ENCODE measurements at regions of chr17 and their contacts with region 1.

Region 1: DNA sequence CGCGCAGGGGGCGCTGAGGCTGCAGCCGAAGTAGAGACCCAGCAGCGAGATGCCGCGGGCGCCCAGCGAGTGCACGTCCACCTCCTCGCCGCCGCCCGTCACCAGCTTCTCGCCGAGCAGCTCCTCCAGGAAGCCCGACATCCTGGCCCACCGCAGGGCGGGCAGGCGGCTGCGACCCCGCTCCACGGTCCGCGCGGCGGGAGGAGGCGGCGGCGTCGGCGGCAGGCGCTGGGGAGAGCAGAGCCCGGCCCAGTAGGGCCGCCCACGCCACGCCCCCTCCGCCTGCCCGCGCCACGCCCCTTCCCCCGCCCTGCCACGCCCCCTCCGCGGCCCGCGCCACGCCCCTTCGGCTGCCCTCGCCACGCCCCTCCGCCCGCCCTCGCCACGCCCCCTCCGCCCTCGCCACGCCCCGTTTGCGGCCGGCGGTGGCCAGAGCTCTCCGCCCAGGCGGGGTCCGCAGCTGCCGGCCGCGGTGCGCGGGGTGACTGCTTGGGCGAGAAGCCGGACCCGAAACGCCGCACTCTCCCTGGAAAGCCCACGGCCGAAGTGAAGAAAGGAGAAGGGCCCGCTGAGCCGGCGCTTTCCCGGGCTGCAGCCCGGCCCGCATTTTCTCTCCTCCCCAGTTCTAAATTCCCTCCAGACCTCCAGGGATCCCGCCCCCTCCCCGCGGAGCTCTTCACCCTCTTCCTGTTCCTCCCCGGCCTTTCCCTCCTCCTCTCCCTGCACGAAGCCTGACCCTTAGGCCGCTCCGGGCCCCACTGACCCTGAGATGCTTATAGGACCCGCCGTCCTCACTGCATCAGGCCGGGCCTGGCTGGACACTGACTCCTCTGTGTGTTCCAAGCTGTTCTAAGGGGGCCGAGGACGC is at the start of gene NXN:
- DNase-seq: peak; percentile 80 to 92 (median 84)
- H3K4me3 ChIP-seq: peak within 1 kb of the TSS; percentile 40
- H3K4me3 Mint-ChIP-seq: peak within 1 kb of the TSS; percentile 74 to 86 (median 80)
- H3K27ac ChIP-seq: no peak within 1 kb of the TSS
- H3K27ac Mint-ChIP-seq: peak within 1 kb of the TSS in 4 of 8 donors; percentile 23 to 82 (median 42)
- H3K4me1 ChIP-seq: peaks cover 19% of the 10 kb centered on the region
- H3K4me1 Mint-ChIP-seq: peaks cover 12 to 23% (median 14%) of the 10 kb centered on the region in 3 donors
- H3K27me3 ChIP-seq: peaks cover 24% of the 10 kb centered on the region
- H3K27me3 Mint-ChIP-seq: peaks cover 27 to 35% of the 10 kb centered on the region in 2 donors
- total RNA-seq, gene NXN: 0.31 to 0.42 TPM

Region 2: DNA sequence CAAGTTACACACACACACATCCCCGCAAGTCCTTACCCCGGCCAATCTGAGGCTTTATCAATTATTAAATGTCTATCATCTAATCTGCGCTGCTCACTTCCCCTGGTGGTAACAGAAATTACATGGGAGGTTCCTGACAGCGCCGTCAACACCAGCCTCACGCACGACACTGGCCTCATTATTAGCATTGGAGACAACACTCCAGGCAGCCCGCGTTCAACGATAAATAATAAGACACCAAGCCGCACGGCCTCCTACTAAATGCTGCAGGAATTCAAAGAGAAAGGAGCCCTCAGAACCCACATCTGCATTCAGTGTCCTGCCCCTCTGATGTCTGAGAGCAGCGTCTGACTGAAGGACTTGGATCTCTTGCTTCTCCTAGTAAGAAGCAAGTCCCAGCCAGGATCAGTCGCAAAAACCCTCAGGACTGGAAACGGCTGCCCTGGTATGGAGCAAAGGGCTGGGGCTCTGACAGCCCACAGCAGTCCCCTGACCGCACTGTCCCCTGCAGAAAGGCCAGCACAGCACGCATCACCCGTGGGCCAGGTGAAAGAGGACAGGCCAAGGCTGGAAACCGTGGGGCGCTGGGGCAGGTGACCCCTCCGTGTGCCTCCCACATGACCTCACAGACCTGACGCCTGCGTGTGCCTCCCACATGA is 619.6 kb before region 1 on chr17:
- CTCF ChIA-PET with region 1: no interaction called
- POLR2A ChIA-PET with region 1: no interaction called
- DNase-seq: no peak
- H3K4me3 ChIP-seq: no peak overlapping the region
- H3K4me3 Mint-ChIP-seq: no peak overlapping the region
- H3K27ac ChIP-seq: no peak overlapping the region
- H3K27ac Mint-ChIP-seq: no peak overlapping the region
- H3K4me1 ChIP-seq: no peaks in the 10 kb centered on the region
- H3K4me1 Mint-ChIP-seq: peaks cover 0 to 12% (median 4%) of the 10 kb centered on the region in 3 donors
- H3K27me3 ChIP-seq: no peaks in the 10 kb centered on the region
- H3K27me3 Mint-ChIP-seq: peaks cover 0 to 2% of the 10 kb centered on the region in 2 donors

Region 3: GRCh38 chr17:794876-795275 is 184.9 kb before region 1 on chr17:
- CTCF ChIA-PET with region 1: interaction called, 12 read pairs
- POLR2A ChIA-PET with region 1: no interaction called
- DNase-seq: peak; percentile 8 to 54 (median 13)
- H3K4me3 ChIP-seq: no peak overlapping the region
- H3K4me3 Mint-ChIP-seq: peak overlapping the region in 1 of 7 donors; percentile 5
- H3K27ac ChIP-seq: no peak overlapping the region
- H3K27ac Mint-ChIP-seq: peak overlapping the region in 2 of 8 donors; percentile 29 to 33
- H3K4me1 ChIP-seq: no peaks in the 10 kb centered on the region
- H3K4me1 Mint-ChIP-seq: peaks cover 5 to 6% (median 5%) of the 10 kb centered on the region in 3 donors
- H3K27me3 ChIP-seq: no peaks in the 10 kb centered on the region
- H3K27me3 Mint-ChIP-seq: no peaks in the 10 kb centered on the region

Region 4: GRCh38 chr17:879549-880442 is 100.0 kb before region 1 on chr17:
- CTCF ChIA-PET with region 1: interaction called, 18 read pairs
- POLR2A ChIA-PET with region 1: interaction called, 5 read pairs
- DNase-seq: peak; percentile 49 to 78 (median 51)
- H3K4me3 ChIP-seq: no peak overlapping the region
- H3K4me3 Mint-ChIP-seq: no peak overlapping the region
- H3K27ac ChIP-seq: no peak overlapping the region
- H3K27ac Mint-ChIP-seq: peak overlapping the region in 1 of 8 donors; percentile 77
- H3K4me1 ChIP-seq: no peaks in the 10 kb centered on the region
- H3K4me1 Mint-ChIP-seq: peaks cover 7 to 10% (median 9%) of the 10 kb centered on the region in 3 donors
- H3K27me3 ChIP-seq: no peaks in the 10 kb centered on the region
- H3K27me3 Mint-ChIP-seq: peaks cover 34 to 35% of the 10 kb centered on the region in 2 donors

Region 5: GRCh38 chr17:896953-897661 is 82.7 kb before region 1 on chr17:
- CTCF ChIA-PET with region 1: no interaction called
- POLR2A ChIA-PET with region 1: interaction called, 13 read pairs
- DNase-seq: no peak
- H3K4me3 ChIP-seq: no peak overlapping the region
- H3K4me3 Mint-ChIP-seq: no peak overlapping the region
- H3K27ac ChIP-seq: no peak overlapping the region
- H3K27ac Mint-ChIP-seq: no peak overlapping the region
- H3K4me1 ChIP-seq: no peaks in the 10 kb centered on the region
- H3K4me1 Mint-ChIP-seq: no peaks in the 10 kb centered on the region
- H3K27me3 ChIP-seq: no peaks in the 10 kb centered on the region
- H3K27me3 Mint-ChIP-seq: peaks cover 23 to 46% of the 10 kb centered on the region in 2 donors

Region 6: DNA sequence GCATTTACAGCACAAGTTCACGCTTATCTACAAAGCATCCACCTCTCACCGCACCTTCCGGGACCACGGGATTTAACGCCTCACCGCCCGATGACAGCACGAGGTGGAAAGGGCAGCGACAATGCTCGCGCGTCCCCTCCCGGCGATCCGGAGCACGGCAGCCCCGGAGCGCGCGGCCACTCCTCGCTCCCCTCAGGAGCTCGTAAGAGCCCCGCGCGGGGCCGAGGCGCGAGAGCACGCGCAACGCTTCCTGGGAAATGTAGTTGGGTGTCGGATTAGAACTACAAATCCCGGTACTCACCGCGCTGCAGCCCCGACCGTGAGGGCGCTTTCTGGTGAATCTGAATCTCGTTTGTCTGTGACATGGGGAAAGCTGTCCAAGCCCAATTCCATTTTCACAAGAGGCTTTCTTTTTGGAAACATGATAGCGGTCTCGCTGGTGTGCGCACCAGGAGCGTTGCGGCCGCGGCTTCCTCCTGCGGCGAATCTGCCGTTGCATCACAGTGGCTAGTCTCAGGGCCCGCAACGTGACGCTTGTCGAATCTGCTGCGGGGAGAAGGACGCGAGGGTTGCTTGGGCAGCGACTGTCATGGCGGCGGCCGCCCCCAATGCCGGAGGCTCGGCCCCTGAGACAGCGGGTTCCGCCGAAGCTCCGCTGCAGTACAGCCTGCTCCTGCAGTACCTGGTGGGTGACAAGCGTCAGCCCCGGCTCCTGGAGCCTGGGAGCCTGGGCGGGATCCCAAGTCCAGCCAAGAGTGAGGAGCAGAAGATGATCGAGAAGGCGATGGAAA is 17.0 kb after region 1 on chr17 and contains the start of gene TIMM22:
- CTCF ChIA-PET with region 1: interaction called, 45 read pairs
- POLR2A ChIA-PET with region 1: interaction called, 7 read pairs
- DNase-seq: peak; percentile 87 to 95 (median 94)
- H3K4me3 ChIP-seq: peak within 1 kb of the TSS; percentile 96
- H3K4me3 Mint-ChIP-seq: peak within 1 kb of the TSS; percentile 94 to 99 (median 99)
- H3K27ac ChIP-seq: peak within 1 kb of the TSS; percentile 62
- H3K27ac Mint-ChIP-seq: peak within 1 kb of the TSS; percentile 96 to 99 (median 97)
- H3K4me1 ChIP-seq: peaks cover 11% of the 10 kb centered on the region
- H3K4me1 Mint-ChIP-seq: peaks cover 21 to 29% (median 29%) of the 10 kb centered on the region in 3 donors
- H3K27me3 ChIP-seq: no peaks in the 10 kb centered on the region
- H3K27me3 Mint-ChIP-seq: no peaks in the 10 kb centered on the region
- total RNA-seq, gene TIMM22: 19.9 to 21.5 TPM

Measured in CD8-positive, alpha-beta memory T cell (primary cell).